Activated B cell treated with CpG ODN at 0.5 μM for 24 hours (primary cell): ENCODE measurements at regions of chr15 and their contacts with region 1.

Region 1: GRCh38 chr15:99507504-99508310 is 58.1 kb upstream of the MEF2A start:
- DNase-seq: no peak
- ATAC-seq: no peak
- H3K4me3 Mint-ChIP-seq: peak overlapping the region; percentile 50
- H3K27ac Mint-ChIP-seq: peak overlapping the region; percentile 97
- H3K4me1 Mint-ChIP-seq: peaks cover 96% of the 10 kb centered on the region
- H3K27me3 Mint-ChIP-seq: no peaks in the 10 kb centered on the region
- CTCF ChIP-seq: no peak

Region 2: DNA sequence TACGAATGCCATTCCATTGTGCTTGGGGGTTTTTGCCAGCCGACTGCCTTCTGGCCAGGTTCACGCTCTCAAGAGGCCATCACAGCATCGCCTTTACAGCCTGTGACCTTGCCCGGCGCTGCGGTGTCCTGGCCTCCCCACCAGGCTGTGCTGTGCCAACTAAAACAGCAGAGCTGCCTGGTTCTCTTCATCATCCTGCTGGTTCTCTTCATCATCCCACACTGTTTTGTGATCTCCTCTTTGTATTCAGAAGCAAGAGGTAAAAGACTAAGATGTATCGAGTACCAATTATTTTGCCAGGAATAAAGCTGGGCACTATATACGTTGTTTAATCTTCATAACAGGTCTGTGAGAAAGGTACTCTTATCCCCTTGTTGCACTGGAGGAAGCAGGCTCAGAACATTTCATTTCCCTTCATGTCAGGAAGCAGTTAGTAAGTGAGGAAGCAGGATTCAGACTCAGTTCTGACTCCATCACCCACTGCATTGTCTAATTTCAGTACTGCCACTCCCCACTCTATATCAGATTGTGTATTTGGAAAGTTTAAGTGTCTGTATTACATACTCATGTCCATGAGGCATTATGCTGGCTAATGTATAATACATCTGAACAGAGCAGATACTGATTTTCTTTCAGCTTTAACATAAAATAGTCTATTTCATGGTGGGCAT is 163.7 kb before region 1 on chr15:
- CTCF ChIA-PET with region 1: no interaction called
- POLR2A ChIA-PET with region 1: interaction called, 8 read pairs
- intact Hi-C with region 1: loop called (anchors 10 kb)
- DNase-seq: peak; percentile 20
- ATAC-seq: peak; percentile 61
- H3K4me3 Mint-ChIP-seq: no peak overlapping the region
- H3K27ac Mint-ChIP-seq: no peak overlapping the region
- H3K4me1 Mint-ChIP-seq: peaks cover 31% of the 10 kb centered on the region
- H3K27me3 Mint-ChIP-seq: no peaks in the 10 kb centered on the region
- CTCF ChIP-seq: no peak

Region 3: DNA sequence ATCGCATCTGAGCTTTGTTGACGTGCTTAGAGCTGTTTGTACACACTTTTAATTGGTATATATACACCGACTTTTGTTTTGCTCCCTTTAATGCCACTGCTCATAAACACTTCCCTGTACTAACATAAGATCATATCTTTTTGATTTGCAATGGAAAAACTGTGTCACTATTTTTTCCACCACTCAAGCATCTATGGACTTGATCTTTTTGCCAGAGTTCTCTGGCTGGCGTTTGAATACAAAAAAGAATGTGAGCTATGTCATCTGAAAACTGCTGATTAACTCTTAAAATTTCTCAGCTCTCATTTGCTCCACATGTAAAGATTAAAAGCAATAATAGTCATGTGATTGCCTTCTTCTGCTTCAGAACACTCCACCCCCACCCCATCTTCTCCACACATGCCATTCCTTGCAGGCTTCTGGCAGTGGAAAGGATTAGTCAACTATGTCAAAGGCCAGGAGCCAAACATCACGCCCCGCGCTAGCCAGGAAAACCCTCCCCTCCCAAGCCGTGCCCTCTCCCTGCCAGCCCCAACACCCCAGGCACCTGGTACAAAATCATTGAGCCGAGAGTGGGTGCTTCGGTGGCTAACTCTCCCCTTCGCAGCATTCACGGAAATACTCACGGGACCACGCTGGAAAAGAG is 65.3 kb before region 1 on chr15:
- CTCF ChIA-PET with region 1: no interaction called
- POLR2A ChIA-PET with region 1: interaction called, 4 read pairs
- intact Hi-C with region 1: loop called (anchors 2 kb)
- DNase-seq: peak; percentile 14
- ATAC-seq: peak; percentile 64
- H3K4me3 Mint-ChIP-seq: peak overlapping the region; percentile 53
- H3K27ac Mint-ChIP-seq: peak overlapping the region; percentile 52
- H3K4me1 Mint-ChIP-seq: peaks cover 37% of the 10 kb centered on the region
- H3K27me3 Mint-ChIP-seq: no peaks in the 10 kb centered on the region
- CTCF ChIP-seq: no peak

Region 4: DNA sequence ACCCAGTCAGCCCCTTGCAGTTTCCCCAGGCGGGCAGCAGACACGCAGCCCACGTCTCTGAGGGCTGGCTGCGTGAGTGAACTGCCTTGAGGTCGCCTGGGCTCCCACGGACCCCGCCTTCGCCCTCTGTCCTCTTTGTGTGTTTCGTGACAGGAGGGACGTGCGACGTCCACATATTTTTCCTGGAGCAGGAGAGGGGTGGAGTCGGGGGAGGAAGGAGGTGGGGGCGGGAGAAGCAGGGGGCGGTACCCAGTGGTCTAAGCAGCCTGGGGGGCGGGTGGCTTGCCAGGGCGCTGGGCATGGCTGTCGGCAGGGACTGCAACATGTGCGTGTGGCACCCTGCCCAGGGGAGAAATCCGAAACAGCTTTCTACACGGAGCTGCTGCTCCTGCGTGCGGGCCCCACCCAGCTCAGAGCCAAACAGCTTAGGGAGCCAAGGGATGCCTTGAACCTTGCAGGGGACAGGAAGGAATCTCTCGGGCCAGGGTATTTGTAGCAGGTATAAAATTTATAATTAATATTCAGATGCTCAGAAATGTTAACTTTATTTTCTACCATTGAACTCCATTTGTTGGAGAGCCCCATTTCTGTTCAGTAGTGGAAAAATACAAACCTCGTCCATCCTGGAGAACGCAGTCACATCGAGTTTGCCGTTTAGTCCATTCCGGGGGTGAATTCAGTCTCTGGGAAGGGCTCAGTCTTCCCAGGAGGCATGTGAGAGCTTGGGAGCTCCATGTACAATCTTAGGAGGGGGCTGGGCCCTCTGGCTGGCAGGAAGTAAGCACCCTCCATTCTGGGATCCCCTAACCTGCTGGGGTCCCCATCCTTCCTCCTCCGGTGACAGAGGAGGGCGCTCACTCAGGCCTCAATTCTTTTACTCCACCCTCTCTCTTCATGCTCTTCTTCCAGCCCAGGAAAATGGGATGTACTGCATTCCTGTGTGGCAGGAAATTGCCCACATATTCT is 21.1 kb before region 1 on chr15:
- CTCF ChIA-PET with region 1: no interaction called
- POLR2A ChIA-PET with region 1: interaction called, 18 read pairs
- intact Hi-C with region 1: loop called (anchors 2 kb)
- DNase-seq: no peak
- ATAC-seq: peak; percentile 75
- H3K4me3 Mint-ChIP-seq: peak overlapping the region; percentile 77
- H3K27ac Mint-ChIP-seq: no peak overlapping the region
- H3K4me1 Mint-ChIP-seq: peaks cover 25% of the 10 kb centered on the region
- H3K27me3 Mint-ChIP-seq: no peaks in the 10 kb centered on the region
- CTCF ChIP-seq: no peak

Region 5: GRCh38 chr15:99631255-99631654 is 123.5 kb after region 1 on chr15:
- CTCF ChIA-PET with region 1: interaction called, 3 read pairs
- POLR2A ChIA-PET with region 1: interaction called, 8 read pairs
- intact Hi-C with region 1: loop called (anchors 2 kb)
- DNase-seq: no peak
- ATAC-seq: peak; percentile 97
- H3K4me3 Mint-ChIP-seq: peak overlapping the region; percentile 73
- H3K27ac Mint-ChIP-seq: peak overlapping the region; percentile 92
- H3K4me1 Mint-ChIP-seq: peaks cover 77% of the 10 kb centered on the region
- H3K27me3 Mint-ChIP-seq: no peaks in the 10 kb centered on the region
- CTCF ChIP-seq: no peak